ENCODE measurements at regions of chr5 and their contacts with region 1.

Region 1: GRCh38 chr5:88729084-88729828 is 153.7 kb downstream of the MEF2C start:
- DNase-seq: peak; percentile 14
- H3K4me3 ChIP-seq: no peak overlapping the region
- CTCF ChIP-seq: peak; percentile 30

Region 2: GRCh38 chr5:88690409-88691229 is 38.6 kb before region 1 on chr5:
- CTCF ChIA-PET with region 1: interaction called, 30 read pairs
- POLR2A ChIA-PET with region 1: no interaction called
- DNase-seq: no peak
- H3K4me3 ChIP-seq: peak overlapping the region; percentile 40
- CTCF ChIP-seq: peak; percentile 93

Region 3: GRCh38 chr5:88875341-88876234 is 146.3 kb after region 1 on chr5:
- CTCF ChIA-PET with region 1: interaction called, 10 read pairs
- POLR2A ChIA-PET with region 1: no interaction called
- DNase-seq: no peak
- H3K4me3 ChIP-seq: no peak overlapping the region
- CTCF ChIP-seq: no peak

Region 4: GRCh38 chr5:89036704-89037489 is 307.6 kb after region 1 on chr5:
- CTCF ChIA-PET with region 1: no interaction called
- POLR2A ChIA-PET with region 1: no interaction called
- DNase-seq: no peak
- H3K4me3 ChIP-seq: no peak overlapping the region
- CTCF ChIP-seq: no peak

Region 5: DNA sequence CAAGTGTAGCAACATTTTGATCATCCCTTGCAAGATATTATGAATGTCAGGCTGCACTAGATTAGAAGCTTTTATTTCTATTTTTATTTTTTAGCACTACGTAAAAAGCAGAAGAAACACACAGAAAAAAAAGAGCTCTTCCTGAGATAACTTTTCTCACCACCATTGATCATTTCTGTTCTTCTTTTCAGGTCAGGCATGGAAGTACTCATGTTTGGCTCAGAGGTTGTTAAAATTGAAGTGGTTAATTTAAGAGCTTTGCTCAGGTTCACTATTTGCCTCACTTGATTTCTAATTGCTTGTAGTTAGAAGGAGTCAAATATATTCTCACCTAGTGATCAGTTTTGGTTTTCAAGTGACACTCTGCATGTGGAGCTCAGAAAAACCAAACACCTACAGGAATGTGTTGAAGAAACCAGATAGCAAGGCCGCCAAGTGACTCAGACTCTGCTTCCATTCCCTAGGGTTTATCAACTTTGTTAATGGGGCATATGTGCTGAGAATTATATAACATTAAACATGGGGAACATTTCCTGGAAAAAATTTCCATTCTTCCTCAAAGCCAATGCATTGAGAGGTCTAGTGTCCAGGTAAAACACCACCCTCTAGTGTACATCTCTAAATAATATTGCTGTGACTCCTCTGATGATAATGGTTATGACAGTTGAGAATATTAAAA is 1000.5 kb after region 1 on chr5:
- CTCF ChIA-PET with region 1: interaction called, 55 read pairs
- POLR2A ChIA-PET with region 1: no interaction called
- DNase-seq: no peak
- H3K4me3 ChIP-seq: no peak overlapping the region
- CTCF ChIP-seq: no peak

Region 6: DNA sequence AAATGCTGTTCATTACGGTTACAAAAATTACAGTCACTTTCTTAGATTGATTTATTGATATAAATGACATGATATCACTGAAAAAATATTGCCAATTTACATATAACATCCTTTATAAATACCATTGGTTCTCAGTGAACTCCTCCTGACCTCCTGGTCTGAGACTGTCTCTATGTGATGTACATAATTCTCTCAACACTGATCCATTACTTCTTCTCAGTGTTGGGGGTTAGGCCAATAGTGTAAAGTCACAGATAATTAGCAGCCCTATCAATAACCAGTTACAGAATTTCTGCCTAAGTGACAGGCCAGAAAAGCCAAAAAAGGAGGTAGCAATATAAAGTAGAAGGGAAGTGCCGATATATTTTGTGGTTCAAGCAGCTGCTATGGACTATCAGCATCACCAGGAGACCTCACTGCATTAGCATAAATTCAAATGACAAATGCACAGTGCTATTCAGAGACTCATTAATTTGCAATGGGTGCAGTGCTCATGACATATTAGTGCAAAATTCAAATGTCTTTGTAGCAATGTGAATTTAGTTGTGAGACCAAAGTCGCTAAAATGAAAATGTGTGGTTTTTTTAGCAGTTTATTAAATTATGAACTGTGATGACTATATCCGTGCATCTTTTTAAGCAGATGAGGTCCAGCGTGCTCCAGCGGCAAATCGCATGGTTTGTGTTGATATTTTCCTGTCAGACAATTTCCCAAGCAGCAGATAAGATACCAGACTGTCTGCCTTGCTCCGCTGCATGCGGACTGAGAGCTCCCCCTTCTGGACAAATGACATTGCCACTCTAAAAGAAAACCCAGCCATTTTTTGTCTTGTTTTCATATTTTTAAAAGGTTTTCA is 1535.7 kb after region 1 on chr5:
- CTCF ChIA-PET with region 1: interaction called, 217 read pairs
- POLR2A ChIA-PET with region 1: no interaction called
- DNase-seq: peak; percentile 19
- H3K4me3 ChIP-seq: no peak overlapping the region
- CTCF ChIP-seq: peak; percentile 77

Measured in AG04449 (cell line).